ENCODE measurements at regions of chr7 and their contacts with region 1.

Region 1: DNA sequence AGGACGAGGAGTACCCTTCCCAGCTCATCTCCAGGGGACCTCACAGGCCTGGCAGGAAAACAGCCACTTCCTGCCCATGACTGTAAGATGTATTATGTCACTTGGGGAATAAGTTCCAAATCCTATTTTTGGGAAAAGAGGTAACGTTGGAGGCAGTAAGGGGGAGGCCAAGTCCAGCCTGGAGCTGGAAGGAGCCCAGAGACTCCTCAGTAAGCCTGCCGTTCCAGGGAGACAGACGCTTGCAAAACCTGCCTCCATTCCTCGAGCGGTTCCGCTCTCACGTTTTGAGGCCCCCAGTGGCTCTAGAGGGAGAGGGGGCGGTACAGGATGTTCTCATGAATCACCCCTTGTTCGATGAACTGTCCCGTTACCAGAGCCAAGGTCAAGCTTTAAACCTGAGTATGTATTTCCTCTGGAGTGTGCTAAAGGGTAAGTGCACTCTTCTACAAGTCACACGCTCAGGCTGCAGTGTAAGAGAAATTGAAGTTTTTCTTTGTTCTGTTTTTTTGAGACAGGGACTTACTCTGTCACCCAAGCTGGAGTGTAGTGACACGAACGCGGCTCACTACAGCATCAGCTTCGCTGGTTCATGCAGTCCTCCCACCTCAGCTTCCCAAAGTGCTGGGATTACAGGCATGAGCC is 45.5 kb upstream of the CYTH3 start:
- DNase-seq: peak; percentile 52
- H3K4me3 ChIP-seq: no peak overlapping the region
- H3K27ac ChIP-seq: peak overlapping the region; percentile 1 to 56 (median 40)
- H3K4me1 ChIP-seq: peaks cover 0 to 7% (median 3%) of the 10 kb centered on the region in 4 donors
- H3K27me3 ChIP-seq: no peaks in the 10 kb centered on the region
- CTCF ChIP-seq: no peak
- EP300 ChIP-seq: no peak
- POLR2A ChIP-seq: no peak

Region 2: GRCh38 chr7:5872326-5872725 is 445.6 kb before region 1 on chr7:
- in situ Hi-C with region 1: loop called in 1 of 4 experiments (anchors 25 kb)
- intact Hi-C with region 1: no loop called
- DNase-seq: no peak
- H3K4me3 ChIP-seq: no peak overlapping the region
- H3K27ac ChIP-seq: no peak overlapping the region
- H3K4me1 ChIP-seq: no peaks in the 10 kb centered on the region
- H3K27me3 ChIP-seq: no peaks in the 10 kb centered on the region
- CTCF ChIP-seq: no peak
- EP300 ChIP-seq: no peak
- POLR2A ChIP-seq: no peak

Region 3: DNA sequence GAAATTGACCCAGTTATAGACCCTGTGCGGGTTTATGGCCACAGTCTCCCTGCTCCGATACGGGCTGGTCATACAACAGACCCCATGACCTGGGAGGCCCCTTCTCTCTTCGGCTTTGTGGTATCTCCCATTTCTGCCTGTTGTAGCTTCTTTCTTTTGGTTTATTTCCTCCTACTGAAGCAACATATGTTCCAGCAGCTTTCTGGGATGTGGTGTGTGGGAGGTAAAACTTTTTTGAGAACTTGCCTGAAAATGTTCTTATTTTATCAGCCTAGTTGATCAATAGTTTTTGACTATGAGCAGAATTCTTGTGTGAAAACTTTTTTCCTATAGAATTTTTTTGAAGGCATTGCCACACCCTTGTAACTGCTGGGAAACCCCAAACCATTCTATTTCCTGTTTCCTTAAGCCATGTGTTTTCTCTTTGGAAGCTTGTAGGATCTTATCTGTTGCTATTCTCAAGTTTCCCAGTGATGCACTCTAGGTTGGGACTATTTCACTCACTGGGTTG is 49.8 kb after region 1 on chr7:
- in situ Hi-C with region 1: no loop called
- intact Hi-C with region 1: no loop called
- DNase-seq: no peak
- H3K4me3 ChIP-seq: no peak overlapping the region
- H3K27ac ChIP-seq: peak overlapping the region; percentile 74 to 86 (median 80)
- H3K4me1 ChIP-seq: peaks cover 0 to 42% (median 18%) of the 10 kb centered on the region in 4 donors
- H3K27me3 ChIP-seq: no peaks in the 10 kb centered on the region
- CTCF ChIP-seq: no peak
- EP300 ChIP-seq: peak; percentile 18
- POLR2A ChIP-seq: no peak